ENCODE measurements at regions of chr10 and their contacts with region 1.

Region 1: GRCh38 chr10:91643700-91644099 is 10.8 kb upstream of the PPP1R3C start:
- DNase-seq: no peak
- ATAC-seq: no peak

Region 2: DNA sequence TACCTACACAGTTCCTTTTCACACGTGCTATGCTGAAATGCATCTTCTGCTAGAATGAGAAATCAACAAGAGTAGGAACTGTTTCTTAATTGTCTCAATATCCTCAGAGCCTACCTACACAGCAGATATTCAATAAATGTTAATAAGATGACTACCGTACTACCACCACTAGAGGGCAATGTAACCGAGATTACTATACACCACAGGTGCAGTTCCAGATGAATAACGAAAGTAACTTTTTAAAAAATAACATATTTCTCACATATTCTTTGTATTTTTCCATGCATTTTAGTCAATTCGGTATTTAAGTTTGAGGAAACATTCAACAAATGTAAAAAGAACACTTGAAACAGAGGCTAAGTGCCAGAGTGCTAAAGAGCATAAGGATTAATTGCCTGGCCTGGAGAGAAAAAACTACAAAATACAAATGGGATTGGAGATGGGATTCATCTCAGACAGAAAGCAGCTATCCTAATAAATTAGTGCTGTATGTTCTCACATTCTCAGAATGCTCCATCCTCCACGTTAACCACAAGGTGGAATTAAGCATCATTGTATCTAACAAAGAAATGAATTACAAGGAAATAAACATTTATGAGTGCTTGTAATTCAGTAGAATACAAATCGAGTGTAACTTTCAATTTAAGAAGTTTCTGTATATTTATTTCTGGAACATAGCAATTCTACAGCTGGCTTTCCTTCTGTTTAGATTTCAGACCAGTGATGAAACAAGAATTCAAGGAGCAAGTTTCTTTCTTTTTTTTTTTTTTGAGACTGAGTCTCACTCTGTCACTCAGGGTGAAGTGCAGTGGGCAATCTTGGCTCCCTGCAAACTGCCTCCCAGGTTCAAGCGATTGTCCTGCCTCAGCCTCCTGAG is 253.8 kb before region 1 on chr10:
- intact Hi-C with region 1: loop called in 1 of 2 experiments (anchors 5 kb)
- DNase-seq: no peak
- ATAC-seq: peak; percentile 83

Region 3: DNA sequence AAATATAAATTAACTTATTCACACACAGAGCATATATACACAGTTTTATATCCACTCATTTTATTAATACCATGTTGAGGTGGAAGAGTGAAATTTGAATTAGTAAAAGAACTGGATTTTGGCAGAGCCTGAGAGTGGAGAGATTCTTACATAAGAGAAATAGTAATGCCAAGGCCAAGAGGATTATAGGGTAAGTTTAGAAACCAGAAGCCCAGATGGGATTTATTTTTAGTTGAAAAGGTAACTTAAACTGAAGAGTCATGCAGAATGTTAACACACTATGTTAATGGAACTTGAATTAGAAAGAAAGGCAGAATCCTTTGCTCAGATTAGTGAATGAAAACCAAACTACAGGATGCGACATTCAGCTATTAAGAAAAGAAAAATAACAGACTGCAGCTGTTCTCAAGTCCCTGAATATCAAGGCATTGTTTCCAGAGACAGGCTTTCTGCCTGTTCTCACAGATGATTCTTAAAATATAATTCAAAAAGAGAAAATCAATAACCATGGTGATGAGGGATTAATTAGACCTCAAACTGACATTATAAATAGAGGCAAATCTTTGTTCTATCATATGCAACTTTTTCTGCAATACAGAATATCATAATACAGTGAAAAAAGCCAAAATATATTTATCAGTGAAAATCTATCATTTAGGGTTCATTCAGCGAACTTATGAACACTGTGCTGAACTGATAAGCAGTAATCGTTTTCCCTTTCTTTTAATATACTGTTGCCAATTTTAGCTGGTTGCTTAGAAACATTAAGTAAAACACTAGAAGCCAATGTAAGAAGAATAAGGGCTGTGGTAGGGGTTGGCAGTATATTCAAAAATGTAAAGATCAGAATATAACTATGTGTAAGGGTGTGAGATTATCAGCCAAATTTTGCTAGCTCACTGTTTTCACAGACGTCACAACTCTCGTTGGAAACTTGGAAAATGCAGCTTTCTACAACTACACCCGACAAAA is 199.2 kb before region 1 on chr10:
- intact Hi-C with region 1: no loop called
- DNase-seq: no peak
- ATAC-seq: no peak

Region 4: DNA sequence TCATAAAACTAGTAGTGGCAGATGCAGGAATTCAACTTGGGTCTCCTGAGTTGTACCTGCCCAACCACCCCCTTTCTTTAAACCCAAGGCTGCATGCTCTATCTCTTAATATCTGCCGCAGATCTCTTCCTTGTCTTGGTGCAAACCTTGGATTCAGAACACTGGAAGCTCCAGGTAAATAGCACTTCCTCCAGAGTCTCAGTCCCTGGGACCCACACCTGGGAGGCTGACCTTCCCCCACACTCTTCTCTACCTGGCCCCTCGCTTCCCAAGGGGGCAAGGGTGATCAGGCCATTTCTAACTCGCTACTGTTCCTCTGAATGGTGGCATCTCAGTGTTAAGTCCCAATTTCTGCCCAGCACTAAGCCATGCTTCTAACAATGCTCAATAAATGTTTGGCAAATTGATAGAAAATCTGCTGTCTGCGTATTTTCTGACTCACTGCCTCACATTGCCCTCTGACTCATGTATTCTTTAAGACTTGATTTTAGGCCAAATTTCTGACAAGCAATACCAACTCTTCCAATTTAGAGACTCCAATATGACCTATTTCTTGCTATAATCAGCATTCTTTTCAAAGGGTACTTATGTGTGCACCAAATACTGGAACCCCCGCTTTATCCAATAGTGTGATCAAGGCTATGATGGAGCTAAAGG is 57.2 kb after region 1 on chr10:
- intact Hi-C with region 1: no loop called
- DNase-seq: no peak
- ATAC-seq: no peak

Measured in left colon (tissue), 2 donors.